ENCODE measurements at regions of chr20 and their contacts with region 1.

Region 1: DNA sequence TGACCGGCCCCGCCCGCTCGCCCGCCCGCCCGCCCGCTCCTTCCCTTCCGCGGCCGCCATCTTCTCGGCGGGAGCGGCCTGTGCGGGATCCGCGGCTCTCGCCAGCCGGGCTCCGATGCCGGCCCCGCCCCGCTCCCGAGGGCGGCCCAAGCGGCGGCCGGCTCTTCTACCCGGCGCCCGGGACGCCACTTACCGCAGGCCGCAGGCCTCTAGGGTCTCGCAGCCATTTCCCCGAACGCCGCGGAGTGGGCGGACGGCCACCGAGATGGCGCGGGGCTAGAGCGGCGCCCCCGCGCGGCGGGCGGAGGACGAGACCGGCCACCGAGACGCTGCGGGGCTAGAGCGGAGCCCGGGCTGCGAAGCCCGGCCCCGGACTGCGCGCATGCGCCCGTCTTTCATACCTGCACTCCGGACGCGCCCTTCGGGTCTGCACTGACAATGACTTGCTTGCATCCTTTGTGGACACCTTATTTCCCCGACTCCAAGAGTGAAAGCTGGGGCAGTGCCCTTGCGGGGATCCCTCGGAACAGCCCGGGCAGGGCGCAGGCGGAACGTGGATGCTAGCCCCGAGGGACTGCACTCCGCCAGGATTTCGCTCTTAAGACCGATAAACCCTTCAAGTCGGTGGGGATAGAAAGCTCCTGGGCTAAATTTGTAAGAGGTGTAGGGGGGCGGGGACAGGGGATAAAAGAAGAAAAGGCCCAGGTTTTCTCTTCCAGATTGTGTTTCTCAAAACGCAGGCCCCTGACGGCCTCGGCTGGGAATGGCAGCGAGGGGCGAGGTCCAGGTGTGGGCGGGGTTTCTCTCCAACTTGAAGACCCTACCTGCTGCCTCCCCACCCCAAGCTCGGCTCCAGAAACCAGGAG is at the start of gene DIDO1:
- DNase-seq: peak; percentile 90
- H3K4me3 Mint-ChIP-seq: peak within 1 kb of the TSS; percentile 96
- H3K27ac Mint-ChIP-seq: peak within 1 kb of the TSS; percentile 97
- H3K4me1 Mint-ChIP-seq: peaks cover 77% of the 10 kb centered on the region
- H3K27me3 Mint-ChIP-seq: no peaks in the 10 kb centered on the region
- total RNA-seq, gene DIDO1: 62.2 to 66.2 TPM

Region 2: GRCh38 chr20:62914970-62915457 is 11.5 kb before region 1 on chr20:
- CTCF ChIA-PET with region 1: interaction called, 7 read pairs
- POLR2A ChIA-PET with region 1: interaction called, 64 read pairs
- DNase-seq: no peak
- H3K4me3 Mint-ChIP-seq: no peak overlapping the region
- H3K27ac Mint-ChIP-seq: peak overlapping the region; percentile 40
- H3K4me1 Mint-ChIP-seq: peaks cover 62% of the 10 kb centered on the region
- H3K27me3 Mint-ChIP-seq: no peaks in the 10 kb centered on the region